ENCODE measurements at regions of chr17 and their contacts with region 1.

Region 1: DNA sequence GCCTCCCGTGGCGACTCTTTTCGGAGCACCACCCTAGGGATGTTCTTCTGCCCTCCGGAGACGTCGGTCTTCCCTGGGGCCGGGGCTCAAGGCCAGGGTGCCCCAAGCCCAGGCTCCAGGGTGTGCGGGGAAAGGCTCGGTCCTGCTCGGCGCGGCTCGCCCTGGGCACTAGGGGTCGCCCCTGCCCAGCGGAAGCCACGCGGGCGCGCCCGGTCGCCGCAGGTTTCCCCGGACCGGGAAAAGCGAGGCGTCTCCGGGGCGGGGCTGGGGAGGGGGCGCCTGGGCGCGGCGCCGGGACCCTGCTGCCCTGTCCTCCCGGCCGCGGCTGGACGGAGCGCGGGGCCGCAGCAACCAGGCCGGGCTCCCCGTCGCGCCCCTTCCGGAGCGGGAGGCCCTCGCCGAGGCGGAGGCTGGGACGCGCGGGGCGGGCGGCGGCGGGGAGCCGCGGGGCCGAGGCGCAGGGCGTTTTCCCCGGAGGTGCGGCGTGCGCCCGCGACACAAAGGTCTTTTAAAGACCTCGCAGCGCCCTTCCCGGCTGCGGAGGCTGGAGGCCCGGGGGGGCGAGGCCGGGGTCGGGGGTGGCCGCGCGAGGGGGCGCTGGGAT is 76.4 kb downstream of the MRC2 start:
- DNase-seq: peak in 1 of 2 donors; percentile 85
- H3K4me3 ChIP-seq: peak overlapping the region; percentile 87 to 93
- H3K27ac ChIP-seq: peak overlapping the region; percentile 35 to 56
- H3K4me1 ChIP-seq: peaks cover 0 to 23% of the 10 kb centered on the region in 2 donors
- H3K27me3 ChIP-seq: no peaks in the 10 kb centered on the region
- CTCF ChIP-seq: peak; percentile 80 to 95 (median 84)

Region 2: GRCh38 chr17:62565817-62566216 is 138.1 kb before region 1 on chr17:
- intact Hi-C with region 1: no loop called
- DNase-seq: no peak
- H3K4me3 ChIP-seq: no peak overlapping the region
- H3K27ac ChIP-seq: no peak overlapping the region
- H3K4me1 ChIP-seq: no peaks in the 10 kb centered on the region
- H3K27me3 ChIP-seq: no peaks in the 10 kb centered on the region
- CTCF ChIP-seq: no peak

Region 3: GRCh38 chr17:62968445-62968923 is 264.6 kb after region 1 on chr17:
- intact Hi-C with region 1: loop called (anchors 1 kb)
- DNase-seq: peak in 1 of 2 donors; percentile 70
- H3K4me3 ChIP-seq: no peak overlapping the region
- H3K27ac ChIP-seq: no peak overlapping the region
- H3K4me1 ChIP-seq: peaks cover 0 to 7% of the 10 kb centered on the region in 2 donors
- H3K27me3 ChIP-seq: no peaks in the 10 kb centered on the region
- CTCF ChIP-seq: peak; percentile 68 to 80 (median 74)

Region 4: DNA sequence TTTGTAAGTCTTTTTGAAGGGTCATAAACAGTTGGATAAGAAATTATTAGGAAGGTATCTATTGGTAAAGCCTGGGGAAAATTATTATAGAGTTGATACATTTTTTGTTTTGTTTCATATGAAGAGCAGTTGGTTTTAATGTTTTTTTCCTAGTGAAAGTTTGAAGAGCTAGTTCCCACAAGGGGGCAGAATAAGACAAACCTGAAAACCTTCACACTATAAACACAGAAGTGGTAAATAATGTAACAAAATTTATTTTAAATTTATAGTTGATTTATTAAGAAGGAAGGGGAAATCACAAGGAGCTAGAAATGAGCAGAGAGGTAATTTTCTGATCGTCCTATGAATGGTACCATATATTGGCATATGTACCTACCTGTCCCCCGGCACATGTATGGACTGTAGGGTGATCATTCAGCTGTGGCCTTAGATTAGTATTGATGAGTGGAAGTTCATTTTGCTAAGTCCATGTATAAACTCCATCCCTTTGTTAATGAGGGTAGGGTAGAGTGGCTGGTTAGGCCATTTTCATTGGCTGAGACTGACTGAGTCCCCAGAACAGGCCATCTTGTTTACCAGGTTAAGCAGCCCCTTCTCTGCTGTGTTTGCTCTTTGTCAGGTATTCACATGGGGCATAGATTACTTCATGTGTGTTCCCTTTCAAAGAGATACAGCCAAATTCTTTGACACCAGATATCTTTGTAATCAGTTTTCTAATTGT is 378.6 kb after region 1 on chr17:
- intact Hi-C with region 1: loop called (anchors 10 kb)
- DNase-seq: no peak
- H3K4me3 ChIP-seq: no peak overlapping the region
- H3K27ac ChIP-seq: no peak overlapping the region
- H3K4me1 ChIP-seq: no peaks in the 10 kb centered on the region
- H3K27me3 ChIP-seq: no peaks in the 10 kb centered on the region
- CTCF ChIP-seq: peak in 2 of 3 experiments; percentile 20 to 41

Region 5: DNA sequence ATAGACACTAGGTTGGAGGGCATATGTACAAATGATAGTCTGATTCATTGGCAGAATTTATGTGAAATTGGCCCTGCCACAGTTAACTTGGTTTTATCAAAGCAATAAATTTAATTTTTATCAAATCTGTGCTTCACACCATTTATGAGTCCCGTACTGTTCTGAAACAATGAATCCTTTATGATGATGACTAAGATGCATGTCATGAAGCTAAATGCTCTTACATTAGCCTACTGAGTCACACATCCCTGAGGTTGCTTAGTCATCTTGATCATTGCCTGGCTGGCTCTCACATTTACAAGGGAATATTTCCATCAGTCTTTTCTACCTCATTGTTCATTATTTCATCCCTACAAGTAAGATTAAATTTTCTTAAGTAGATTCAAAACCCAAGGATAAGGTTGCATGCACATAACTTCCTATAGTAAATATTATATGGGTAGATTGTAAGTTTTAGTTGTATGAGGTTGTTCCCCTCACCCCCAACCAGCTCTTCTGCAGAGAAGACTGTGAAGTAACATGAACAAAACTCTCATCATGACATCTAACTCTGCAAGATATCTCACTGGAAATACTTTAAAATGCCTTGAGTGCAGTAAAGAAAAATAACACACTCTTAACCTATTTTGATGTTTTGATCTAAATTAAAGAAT is 571.6 kb after region 1 on chr17:
- intact Hi-C with region 1: loop called (anchors 10 kb)
- DNase-seq: no peak
- H3K4me3 ChIP-seq: no peak overlapping the region
- H3K27ac ChIP-seq: no peak overlapping the region
- H3K4me1 ChIP-seq: peaks cover 0 to 17% of the 10 kb centered on the region in 2 donors
- H3K27me3 ChIP-seq: no peaks in the 10 kb centered on the region
- CTCF ChIP-seq: no peak

Region 6: GRCh38 chr17:63406689-63407330 is 702.9 kb after region 1 on chr17:
- intact Hi-C with region 1: loop called (anchors 1 kb)
- DNase-seq: peak in 1 of 2 donors; percentile 87
- H3K4me3 ChIP-seq: no peak overlapping the region
- H3K27ac ChIP-seq: peak overlapping the region; percentile 55 to 69
- H3K4me1 ChIP-seq: peaks cover 2 to 3% of the 10 kb centered on the region in 2 donors
- H3K27me3 ChIP-seq: no peaks in the 10 kb centered on the region
- CTCF ChIP-seq: peak; percentile 75 to 86 (median 78)

Region 7: GRCh38 chr17:64036198-64036922 is 1332.5 kb after region 1 on chr17:
- intact Hi-C with region 1: no loop called
- DNase-seq: peak in 1 of 2 donors; percentile 59
- H3K4me3 ChIP-seq: no peak overlapping the region
- H3K27ac ChIP-seq: no peak overlapping the region
- H3K4me1 ChIP-seq: no peaks in the 10 kb centered on the region
- H3K27me3 ChIP-seq: no peaks in the 10 kb centered on the region
- CTCF ChIP-seq: no peak

Measured in ascending aorta (tissue), 2 donors.